Activated CD4-positive, alpha-beta memory T cell treated with anti-CD3 and anti-CD28 coated beads, Interleukin-2, amount 10 ng/mL, durations not matched to agents 7 days and 5 days (primary cell): ENCODE measurements at regions of chr6 and their contacts with region 1.

Region 1: DNA sequence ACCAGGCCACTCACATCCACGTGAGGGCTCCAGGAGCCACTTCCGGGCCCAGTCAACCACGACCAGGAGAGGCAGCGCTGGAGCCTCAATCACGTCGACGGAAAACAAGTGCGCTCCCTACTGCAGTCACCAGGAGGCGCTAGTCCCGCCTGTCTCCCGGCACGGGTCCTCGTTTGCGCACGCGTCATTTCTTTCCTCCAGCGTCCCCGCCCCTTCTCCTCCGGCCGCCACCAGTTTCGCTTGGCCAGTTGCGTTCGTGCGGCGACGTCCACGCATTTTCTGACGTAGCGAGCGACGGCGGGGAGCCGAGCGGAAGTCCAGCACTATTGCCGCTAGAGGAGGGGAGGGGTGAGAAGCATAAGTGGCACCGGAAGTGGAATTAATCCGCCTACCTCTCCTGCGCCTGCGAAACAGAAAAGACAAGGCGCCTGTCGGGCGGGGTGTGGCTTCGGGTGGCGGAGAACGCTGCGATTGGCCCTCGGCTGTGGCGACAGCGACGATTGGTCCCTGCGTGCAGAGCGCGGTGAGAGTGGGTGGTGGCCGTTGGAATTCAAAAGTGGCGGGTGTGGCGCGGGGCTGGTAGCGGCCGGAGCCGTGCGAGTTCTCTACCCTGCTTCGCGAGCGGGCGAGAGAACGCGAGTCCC is at the start of gene KIFC1:
- DNase-seq: peak; percentile 100
- H3K4me3 Mint-ChIP-seq: peak within 1 kb of the TSS; percentile 95
- H3K27ac Mint-ChIP-seq: peak within 1 kb of the TSS; percentile 93
- H3K4me1 Mint-ChIP-seq: peaks cover 44% of the 10 kb centered on the region
- H3K27me3 Mint-ChIP-seq: no peaks in the 10 kb centered on the region
- total RNA-seq, gene KIFC1: 125 to 127 TPM

Region 2: GRCh38 chr6:31689249-31690110 is 1701.9 kb before region 1 on chr6:
- CTCF ChIA-PET with region 1: no interaction called
- POLR2A ChIA-PET with region 1: no interaction called
- DNase-seq: no peak
- H3K4me3 Mint-ChIP-seq: no peak overlapping the region
- H3K27ac Mint-ChIP-seq: no peak overlapping the region
- H3K4me1 Mint-ChIP-seq: peaks cover 3% of the 10 kb centered on the region
- H3K27me3 Mint-ChIP-seq: no peaks in the 10 kb centered on the region

Region 3: DNA sequence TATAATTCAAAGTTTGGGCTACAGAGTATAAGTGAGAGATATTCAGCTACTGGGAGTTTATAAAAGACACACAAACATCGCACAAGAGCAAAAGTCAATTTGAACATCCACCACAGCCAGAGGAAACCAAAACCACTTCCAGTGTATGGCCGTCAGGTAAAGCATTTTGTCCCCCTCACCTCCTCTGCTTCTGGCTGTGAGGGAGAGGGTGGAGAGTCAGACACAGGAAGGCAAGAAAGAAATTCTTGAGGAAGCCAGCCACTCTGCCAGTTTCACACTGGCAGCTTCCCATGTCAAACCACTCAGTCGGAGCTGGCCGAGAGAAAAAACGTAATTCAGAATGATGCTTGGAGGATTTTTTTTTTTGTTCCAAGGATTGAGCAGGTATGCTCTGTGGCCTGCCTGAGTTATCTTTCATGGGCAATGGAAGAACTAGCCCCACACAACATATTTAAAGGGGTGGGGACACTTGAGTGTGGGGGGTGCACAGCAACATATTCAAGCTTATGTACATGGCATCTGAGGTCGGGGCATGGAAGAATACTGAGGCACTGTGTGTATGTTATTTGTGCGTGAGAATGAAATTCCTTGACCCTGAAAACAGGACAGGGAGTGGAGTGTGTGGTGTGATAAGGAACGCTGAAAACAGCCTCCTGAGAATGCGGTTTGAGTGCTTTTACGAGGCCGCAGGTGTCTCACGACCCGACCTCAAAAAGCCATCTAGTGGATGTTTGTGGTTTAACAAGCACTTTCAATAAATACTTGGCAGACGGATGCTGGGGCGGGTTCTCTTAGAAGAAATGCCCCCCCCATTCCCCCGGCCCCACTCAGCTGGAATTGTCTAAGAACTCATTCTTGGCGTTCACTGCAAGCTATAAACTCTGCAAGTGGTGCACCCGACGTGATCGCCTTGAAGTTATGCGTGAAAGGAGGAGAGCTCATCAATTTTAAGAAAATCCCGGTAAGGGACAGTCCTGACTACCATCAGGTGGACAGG is 46.4 kb before region 1 on chr6:
- CTCF ChIA-PET with region 1: interaction called, 9 read pairs
- POLR2A ChIA-PET with region 1: interaction called, 11 read pairs
- DNase-seq: peak; percentile 79
- H3K4me3 Mint-ChIP-seq: peak overlapping the region; percentile 76
- H3K27ac Mint-ChIP-seq: peak overlapping the region; percentile 97
- H3K4me1 Mint-ChIP-seq: peaks cover 46% of the 10 kb centered on the region
- H3K27me3 Mint-ChIP-seq: peaks cover 2% of the 10 kb centered on the region

Region 4: DNA sequence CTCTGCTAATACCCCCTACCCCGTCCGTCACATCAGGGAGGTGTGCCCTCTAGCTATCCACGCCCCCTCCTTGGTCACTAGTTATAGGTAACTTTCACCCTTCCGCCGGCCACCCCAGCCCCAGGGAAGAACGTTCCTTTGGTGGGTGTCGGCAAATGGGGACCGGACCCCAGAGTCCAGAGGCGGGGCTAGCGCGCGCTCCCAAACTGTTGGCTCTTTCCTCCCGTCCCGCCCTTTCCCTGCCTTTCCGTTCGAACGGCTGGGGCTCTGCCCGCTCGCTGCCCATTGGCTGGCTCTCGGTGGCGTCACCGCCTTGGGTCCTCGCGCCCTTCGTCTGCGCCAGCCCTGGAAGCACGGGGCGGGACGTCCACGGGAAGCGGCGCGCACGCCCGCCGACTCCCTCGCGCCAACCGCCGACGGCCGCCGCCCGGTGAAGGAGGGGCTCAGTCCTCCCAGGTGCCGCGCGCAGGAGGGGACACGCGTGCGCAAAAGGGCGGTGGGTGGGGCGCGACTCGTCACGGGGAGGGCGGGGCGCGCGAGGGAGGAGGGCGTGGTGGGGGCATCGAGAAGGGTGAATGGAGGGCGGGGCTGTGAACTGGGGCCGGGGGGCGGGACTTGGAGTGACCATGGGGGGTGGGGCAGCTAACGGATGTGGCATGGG is 18.8 kb after region 1 on chr6:
- CTCF ChIA-PET with region 1: interaction called, 3 read pairs
- POLR2A ChIA-PET with region 1: interaction called, 12 read pairs
- DNase-seq: peak; percentile 99
- H3K4me3 Mint-ChIP-seq: peak overlapping the region; percentile 80
- H3K27ac Mint-ChIP-seq: peak overlapping the region; percentile 97
- H3K4me1 Mint-ChIP-seq: peaks cover 59% of the 10 kb centered on the region
- H3K27me3 Mint-ChIP-seq: no peaks in the 10 kb centered on the region

Region 5: GRCh38 chr6:33417903-33418689 is 26.7 kb after region 1 on chr6 and contains the start of gene CUTA:
- CTCF ChIA-PET with region 1: interaction called, 5 read pairs
- POLR2A ChIA-PET with region 1: interaction called, 14 read pairs
- DNase-seq: peak; percentile 99
- H3K4me3 Mint-ChIP-seq: peak within 1 kb of the TSS; percentile 92
- H3K27ac Mint-ChIP-seq: peak within 1 kb of the TSS; percentile 98
- H3K4me1 Mint-ChIP-seq: peaks cover 67% of the 10 kb centered on the region
- H3K27me3 Mint-ChIP-seq: peaks cover 15% of the 10 kb centered on the region
- total RNA-seq, gene CUTA: 243 TPM

Region 6: DNA sequence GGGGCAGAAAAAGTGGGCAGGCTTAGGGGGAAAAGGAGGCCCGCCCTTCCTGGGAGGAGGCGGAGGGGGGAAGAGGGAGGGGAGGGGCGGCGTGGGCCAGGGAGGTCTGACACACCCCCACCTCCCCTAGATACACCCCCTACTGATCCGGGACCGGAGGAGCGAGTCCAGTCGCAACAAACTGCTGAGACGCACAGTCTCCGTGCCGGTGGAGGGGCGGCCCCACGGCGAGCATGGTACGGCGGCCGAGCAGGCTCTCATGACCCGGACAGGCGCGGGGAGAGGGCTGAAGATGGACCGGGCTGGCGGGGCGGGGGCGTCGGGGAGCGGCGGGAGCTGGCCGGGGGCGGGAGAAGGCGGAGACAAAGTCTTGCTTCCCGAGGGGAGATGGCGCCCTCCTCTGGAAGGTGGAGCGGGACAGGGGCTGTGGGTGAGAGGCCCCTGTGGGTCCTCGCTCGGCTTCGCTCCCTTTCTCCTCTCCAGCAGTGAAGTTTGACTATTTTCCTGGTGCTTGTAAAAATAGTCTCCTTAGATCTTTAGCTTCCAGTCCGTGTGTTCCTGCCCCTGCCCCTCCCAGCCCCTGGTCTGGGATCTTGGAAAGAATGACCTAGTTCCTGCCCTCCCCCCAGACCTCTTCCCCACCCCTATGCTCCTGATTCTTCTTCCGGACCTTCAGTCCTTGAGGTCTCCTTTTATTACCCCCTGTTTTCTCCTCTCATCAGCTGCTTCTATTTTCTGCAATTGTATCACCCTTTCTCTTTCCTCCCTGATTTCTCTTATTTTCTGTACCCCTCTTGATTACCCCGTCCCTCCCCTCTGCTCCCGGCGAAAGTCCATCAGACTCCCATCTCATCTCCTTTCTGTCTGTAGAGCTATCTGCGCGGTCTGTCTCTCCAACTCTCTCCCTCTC is 34.5 kb after region 1 on chr6:
- CTCF ChIA-PET with region 1: interaction called, 11 read pairs
- POLR2A ChIA-PET with region 1: interaction called, 6 read pairs
- DNase-seq: peak; percentile 85
- H3K4me3 Mint-ChIP-seq: peak overlapping the region; percentile 98
- H3K27ac Mint-ChIP-seq: peak overlapping the region; percentile 93
- H3K4me1 Mint-ChIP-seq: peaks cover 75% of the 10 kb centered on the region
- H3K27me3 Mint-ChIP-seq: peaks cover 15% of the 10 kb centered on the region